Activated CD4-positive, alpha-beta T cell treated with anti-CD3 and anti-CD28 coated beads, Interleukin-2, amount 10 ng/mL, durations not matched to agents 24 days and 14 days (primary cell): ENCODE measurements at regions of chr19 and their contacts with region 1.

Region 1: DNA sequence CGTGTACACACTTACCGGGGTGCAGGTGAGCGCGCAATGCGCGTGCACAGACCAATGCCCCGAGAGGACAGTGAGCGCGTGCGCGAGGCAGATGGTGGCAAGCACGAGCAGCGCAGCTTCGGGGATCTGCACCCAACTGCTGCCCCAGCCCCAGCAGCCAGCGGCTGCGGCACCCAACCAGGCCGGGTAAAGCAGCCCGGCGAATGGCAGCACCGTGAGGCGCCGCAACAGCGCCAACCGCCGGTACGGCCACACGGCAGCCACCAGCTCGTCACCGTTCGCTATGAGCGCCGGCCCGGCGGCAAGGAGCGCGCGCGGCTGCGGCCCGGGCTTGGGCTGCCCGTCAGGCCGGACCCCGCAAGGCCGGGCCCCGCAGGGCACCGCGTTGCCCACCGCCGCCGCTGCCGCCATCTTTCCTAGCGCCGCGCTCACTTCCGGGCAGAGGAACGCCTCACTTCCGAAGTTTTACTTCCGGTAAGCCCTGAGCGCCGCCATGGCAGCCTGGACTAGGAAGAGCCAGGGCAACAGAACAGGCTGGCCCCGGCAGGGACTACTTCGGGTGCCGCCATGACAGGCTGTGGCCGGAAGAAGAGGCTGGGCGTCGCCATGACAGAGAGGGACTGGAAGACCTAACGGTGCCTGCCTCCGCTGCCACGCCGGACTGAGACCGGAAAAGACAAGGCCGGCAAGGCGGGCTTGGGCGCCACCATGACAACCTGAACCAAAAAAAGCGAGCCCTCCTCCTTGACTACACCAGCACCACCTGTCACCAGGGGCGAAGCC is at the start of gene ATP13A1:
- DNase-seq: peak; percentile 98
- H3K4me3 Mint-ChIP-seq: peak within 1 kb of the TSS; percentile 97
- H3K27ac Mint-ChIP-seq: peak within 1 kb of the TSS; percentile 99
- H3K4me1 Mint-ChIP-seq: peaks cover 34% of the 10 kb centered on the region
- H3K27me3 Mint-ChIP-seq: no peaks in the 10 kb centered on the region
- total RNA-seq, gene ATP13A1: 85.9 and 89.2 TPM in 2 replicates

Region 2: GRCh38 chr19:19597809-19598306 is 65.6 kb before region 1 on chr19:
- intact Hi-C with region 1: loop called (anchors 2 kb)
- DNase-seq: peak; percentile 91
- H3K4me3 Mint-ChIP-seq: peak overlapping the region; percentile 82
- H3K27ac Mint-ChIP-seq: peak overlapping the region; percentile 96
- H3K4me1 Mint-ChIP-seq: peaks cover 61% of the 10 kb centered on the region
- H3K27me3 Mint-ChIP-seq: no peaks in the 10 kb centered on the region

Region 3: DNA sequence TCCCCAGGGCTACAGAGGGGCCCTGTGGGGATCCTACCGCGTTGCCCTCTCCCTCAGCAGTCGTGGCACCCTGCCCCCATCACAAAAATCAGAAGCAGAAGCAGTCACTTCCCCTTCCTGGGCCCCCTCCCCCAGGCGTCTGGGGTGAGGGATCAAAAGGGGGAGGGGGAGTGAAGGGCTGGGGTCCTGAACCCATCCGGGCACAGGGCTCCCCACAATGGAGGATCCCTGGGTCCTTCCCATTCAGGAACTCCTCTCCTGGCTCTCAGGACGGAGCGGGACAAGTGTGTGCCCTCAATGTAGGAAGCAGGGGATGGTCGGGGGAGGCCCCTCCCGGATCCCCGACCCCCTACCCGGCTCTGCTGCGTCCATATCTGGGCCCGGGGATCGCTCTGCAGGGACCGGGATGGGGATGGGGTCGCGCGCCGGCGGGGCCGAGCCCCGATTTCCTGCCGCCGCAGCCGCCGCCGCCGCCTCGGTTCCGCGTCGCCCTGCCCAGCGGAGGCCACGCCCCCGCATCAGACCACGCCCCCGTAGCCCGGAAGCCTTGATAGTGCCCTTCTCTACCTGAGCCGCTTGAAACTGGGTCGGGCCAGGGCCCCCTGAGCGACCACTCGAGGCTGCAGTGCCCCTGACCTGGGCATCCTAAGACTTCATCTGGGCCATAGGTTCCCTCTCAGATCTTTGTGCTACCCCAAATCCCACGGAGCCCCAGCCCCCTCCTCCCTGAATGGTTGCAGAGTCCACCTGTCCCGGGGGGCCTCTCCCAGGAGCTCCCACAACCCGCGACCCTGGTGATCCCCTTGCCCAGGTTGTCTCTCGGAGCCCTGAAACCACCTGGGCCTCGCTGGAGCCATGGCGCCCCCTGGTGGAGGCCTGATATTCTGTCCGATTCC is 20.0 kb before region 1 on chr19 and contains the start of gene GMIP:
- intact Hi-C with region 1: loop called (anchors 1 kb)
- DNase-seq: peak; percentile 96
- H3K4me3 Mint-ChIP-seq: peak within 1 kb of the TSS; percentile 98
- H3K27ac Mint-ChIP-seq: peak within 1 kb of the TSS; percentile 94
- H3K4me1 Mint-ChIP-seq: peaks cover 14% of the 10 kb centered on the region
- H3K27me3 Mint-ChIP-seq: no peaks in the 10 kb centered on the region
- total RNA-seq, gene GMIP: 56.1 and 61.2 TPM in 2 replicates

Region 4: DNA sequence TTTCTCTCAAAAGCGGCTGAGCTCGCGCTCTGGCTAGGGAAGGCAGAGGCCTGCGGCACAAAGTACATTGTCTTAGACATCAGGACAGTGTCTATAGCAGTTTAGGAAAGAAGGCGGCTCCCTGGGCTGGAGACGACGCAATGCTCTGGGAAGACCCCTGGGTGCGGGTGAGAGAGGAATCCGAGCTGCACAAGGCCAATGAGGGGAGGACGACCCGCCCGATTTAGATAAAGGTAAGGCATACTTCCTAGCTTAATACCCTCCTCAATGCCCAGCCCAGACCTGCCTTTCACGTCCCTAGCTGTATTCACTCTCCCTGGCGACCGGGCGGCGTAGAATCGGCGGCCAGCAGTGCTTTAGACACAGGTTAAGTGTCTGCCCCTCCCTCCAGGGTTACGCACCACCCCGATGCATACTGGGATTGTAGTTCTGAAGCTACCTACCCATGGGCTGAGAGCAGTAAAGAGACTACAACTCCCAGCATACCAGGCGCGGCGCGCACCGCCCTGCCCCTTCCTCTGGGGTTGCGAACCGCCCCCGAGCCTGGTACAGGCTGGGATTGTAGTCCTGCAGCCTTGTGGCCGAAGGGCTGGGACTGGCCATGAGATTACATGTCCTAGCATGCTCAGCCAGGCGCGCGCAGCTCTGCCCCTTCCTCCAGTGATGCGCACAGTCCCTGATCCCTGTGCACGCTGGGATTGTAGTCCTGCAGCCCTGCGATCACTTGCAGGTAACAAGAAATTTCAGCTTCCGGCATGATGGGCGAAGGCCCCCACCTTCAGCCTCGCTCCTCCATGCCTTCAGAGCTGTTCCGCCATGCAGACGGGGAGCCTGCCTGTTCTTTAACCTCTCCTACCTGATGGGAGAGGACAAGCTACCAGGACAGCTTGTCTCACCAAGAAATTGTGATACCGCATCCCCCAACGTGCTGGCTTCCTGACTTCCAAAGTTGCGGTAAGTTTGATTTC is 112.9 kb after region 1 on chr19:
- intact Hi-C with region 1: loop called (anchors 1 kb)
- DNase-seq: peak; percentile 98
- H3K4me3 Mint-ChIP-seq: peak overlapping the region; percentile 93
- H3K27ac Mint-ChIP-seq: peak overlapping the region; percentile 85
- H3K4me1 Mint-ChIP-seq: peaks cover 24% of the 10 kb centered on the region
- H3K27me3 Mint-ChIP-seq: no peaks in the 10 kb centered on the region

Region 5: DNA sequence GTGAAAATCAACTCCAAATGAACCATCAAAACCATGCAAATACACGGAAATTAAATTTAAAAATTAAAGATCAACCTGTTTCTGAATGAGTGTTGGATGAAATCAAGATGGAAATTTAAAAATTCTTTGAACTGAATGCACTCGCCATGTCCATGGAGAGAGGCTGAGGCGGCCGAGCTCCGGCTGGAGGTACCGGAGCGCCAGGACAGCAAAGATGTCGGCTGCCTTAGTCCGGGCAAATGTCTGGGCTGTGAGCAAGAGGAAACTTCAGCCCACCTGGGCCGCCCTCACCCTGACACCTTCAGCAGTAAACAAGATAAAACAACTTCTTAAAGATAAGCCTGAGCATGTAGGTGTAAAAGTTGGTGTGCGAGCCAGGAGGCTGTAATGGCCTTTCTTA is 163.4 kb after region 1 on chr19:
- intact Hi-C with region 1: no loop called
- DNase-seq: no peak
- H3K4me3 Mint-ChIP-seq: no peak overlapping the region
- H3K27ac Mint-ChIP-seq: no peak overlapping the region
- H3K4me1 Mint-ChIP-seq: peaks cover 2% of the 10 kb centered on the region
- H3K27me3 Mint-ChIP-seq: no peaks in the 10 kb centered on the region

Region 6: GRCh38 chr19:19865739-19866481 is 202.5 kb after region 1 on chr19 and contains the start of gene ZNF253:
- intact Hi-C with region 1: loop called (anchors 2 kb)
- DNase-seq: peak; percentile 97
- H3K4me3 Mint-ChIP-seq: peak within 1 kb of the TSS; percentile 100
- H3K27ac Mint-ChIP-seq: peak within 1 kb of the TSS; percentile 100
- H3K4me1 Mint-ChIP-seq: peaks cover 22% of the 10 kb centered on the region
- H3K27me3 Mint-ChIP-seq: no peaks in the 10 kb centered on the region
- total RNA-seq, gene ZNF253: 8.0 and 9.4 TPM in 2 replicates

Region 7: DNA sequence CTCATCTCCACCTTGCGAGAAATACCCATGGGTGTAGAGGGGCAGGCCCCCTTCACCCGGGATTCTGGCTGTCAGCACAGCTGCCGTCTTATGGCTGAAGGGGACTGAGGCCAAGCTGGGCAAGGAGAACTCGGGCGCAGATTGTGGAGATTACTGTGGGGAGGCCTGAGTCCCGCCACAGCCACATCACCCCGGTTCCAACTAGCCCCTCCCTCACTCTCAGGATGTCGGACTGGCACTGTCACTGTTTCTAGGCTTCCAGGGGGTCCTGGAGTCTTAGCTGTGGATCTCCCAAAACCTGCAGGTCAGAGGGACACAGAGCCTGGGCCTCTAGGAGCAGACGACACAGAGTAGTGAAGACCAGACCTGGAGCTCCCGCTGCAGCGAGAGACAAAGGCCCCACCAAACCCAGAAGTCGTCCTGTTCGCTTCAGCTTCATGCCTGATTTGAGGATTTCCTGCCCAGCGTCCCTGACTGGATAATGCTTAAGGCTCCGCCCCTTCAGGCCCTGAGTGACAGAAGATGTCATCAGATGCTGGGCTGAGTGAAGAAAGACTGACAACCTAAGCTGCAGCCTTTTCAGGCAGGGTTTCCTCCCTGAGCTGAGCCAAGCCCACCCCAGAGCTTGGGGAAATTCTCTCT is 293.1 kb after region 1 on chr19:
- intact Hi-C with region 1: loop called (anchors 2 kb)
- DNase-seq: no peak
- H3K4me3 Mint-ChIP-seq: no peak overlapping the region
- H3K27ac Mint-ChIP-seq: no peak overlapping the region
- H3K4me1 Mint-ChIP-seq: peaks cover 5% of the 10 kb centered on the region
- H3K27me3 Mint-ChIP-seq: no peaks in the 10 kb centered on the region

Region 8: DNA sequence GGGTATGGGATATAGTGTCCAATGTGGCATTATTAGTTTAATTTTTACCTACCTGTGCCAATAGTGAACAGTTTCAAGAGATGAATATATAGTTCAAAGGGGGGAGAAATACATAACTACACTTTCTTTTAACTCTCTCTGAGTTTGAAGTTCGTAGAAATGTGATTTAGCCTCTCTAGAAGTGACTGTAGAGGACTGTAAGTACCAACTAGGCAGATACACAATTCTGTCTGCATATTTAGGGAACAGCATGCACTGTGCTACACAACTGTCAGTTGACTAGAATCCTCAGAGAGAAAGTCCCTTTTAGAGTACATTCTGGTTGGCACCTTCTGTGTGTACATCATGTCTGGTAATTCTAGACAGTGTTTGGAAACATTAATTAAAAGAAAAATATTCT is 396.8 kb after region 1 on chr19:
- intact Hi-C with region 1: no loop called
- DNase-seq: no peak
- H3K4me3 Mint-ChIP-seq: no peak overlapping the region
- H3K27ac Mint-ChIP-seq: no peak overlapping the region
- H3K4me1 Mint-ChIP-seq: no peaks in the 10 kb centered on the region
- H3K27me3 Mint-ChIP-seq: no peaks in the 10 kb centered on the region